Uterus (tissue), 4 donors: ENCODE measurements at regions of chr10 and their contacts with region 1.

Region 1: DNA sequence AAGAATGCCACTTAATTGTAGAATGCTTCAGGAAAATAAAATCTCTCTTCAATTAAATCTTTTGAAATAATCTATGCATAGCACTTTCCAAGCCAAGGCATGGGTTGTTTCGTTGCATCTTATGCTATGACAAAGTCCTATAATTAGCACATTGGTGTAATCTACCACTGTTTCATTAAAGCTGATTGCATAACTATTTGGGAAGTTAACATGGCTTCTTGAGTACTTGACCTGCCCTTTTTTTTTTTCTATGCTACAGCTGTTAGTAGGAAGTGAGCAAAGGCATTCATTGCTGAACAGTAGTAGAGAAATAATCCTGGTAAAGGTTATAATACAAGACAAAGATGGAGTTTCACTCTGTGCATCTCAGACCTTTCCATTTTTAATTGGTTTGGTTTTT is 557.2 kb upstream of the CELF2 start:
- DNase-seq: no peak
- H3K4me3 ChIP-seq: no peak overlapping the region
- H3K27ac ChIP-seq: no peak overlapping the region
- H3K4me1 ChIP-seq: no peaks in the 10 kb centered on the region
- H3K27me3 ChIP-seq: no peaks in the 10 kb centered on the region
- CTCF ChIP-seq: no peak
- POLR2A ChIP-seq: no peak

Region 2: DNA sequence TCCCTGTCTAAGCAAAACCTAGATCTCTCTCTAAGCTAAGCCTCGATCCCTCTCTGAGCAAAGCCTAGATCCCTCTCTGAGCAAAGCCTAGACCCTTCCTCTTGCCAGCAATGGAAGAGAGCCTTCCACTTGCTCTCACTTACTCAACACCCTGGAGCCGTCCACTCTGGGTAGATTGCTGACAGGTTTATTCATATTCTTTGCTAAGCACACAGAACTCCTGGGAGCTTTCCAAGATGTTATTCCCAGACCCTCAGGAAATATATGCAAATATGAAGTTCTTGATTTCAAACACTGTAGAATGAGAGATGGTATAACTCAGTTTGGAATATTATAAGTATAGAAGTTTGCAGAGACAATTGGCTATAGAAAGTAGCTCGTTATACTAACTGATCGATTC is 53.4 kb after region 1 on chr10:
- intact Hi-C with region 1: loop called (anchors 2 kb)
- DNase-seq: no peak
- H3K4me3 ChIP-seq: no peak overlapping the region
- H3K27ac ChIP-seq: no peak overlapping the region
- H3K4me1 ChIP-seq: no peaks in the 10 kb centered on the region
- H3K27me3 ChIP-seq: no peaks in the 10 kb centered on the region
- CTCF ChIP-seq: no peak
- POLR2A ChIP-seq: no peak

Region 3: DNA sequence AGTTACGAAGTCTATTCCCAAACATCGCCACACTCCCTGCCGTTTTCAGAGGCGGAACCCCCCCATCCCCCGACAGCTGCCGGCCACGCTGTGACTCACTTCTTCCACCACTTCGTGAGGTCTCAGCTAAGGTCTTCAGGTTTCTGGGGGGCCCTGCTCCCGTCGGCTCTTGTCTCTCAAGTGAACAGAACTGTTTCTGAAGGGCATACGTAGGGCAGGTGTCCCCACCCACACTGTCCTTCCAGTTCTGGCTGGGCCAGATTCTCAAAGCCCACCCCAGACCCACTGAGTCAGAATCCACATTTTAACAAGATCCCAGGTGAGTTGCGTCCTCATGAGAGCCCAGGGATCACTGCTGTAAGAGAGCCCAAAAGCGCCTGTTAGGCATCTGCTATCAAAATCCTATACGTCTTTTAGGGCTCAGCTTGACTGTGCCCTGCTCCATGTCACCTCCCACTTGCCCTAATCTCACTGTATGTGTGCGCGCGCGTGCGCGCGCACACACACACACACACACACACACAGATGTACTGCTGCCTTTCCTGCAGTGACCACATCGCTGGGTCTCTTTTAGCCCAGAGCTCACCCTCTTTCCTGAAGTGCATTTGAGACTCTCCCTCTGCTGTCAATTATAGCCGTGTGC is 1441.5 kb after region 1 on chr10:
- intact Hi-C with region 1: no loop called
- DNase-seq: no peak
- H3K4me3 ChIP-seq: no peak overlapping the region
- H3K27ac ChIP-seq: no peak overlapping the region
- H3K4me1 ChIP-seq: no peaks in the 10 kb centered on the region
- H3K27me3 ChIP-seq: no peaks in the 10 kb centered on the region
- CTCF ChIP-seq: no peak
- POLR2A ChIP-seq: no peak